Calu3 (cell line): ENCODE measurements at regions of chr12 and their contacts with region 1.

Region 1: DNA sequence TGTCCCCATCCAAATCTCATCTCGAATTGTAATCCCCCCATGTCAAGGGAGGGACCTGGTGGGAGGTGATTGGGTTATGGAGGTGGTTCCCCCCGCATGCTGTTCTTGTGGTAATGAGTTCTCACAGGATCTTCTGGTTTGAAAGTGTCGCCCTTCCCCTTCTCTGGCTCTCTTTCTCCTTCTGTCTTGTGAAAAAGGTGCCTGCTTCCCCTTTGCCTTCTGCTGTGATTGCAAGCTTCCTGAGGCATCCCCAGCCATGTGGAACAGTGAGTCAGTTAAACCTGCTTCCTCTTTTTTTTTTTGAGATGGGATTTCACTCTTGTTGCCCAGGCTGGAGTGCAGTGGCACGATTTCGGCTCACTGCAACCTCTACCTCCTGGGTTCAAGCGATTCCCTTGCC is 104.0 kb downstream of the CCDC91 start:
- DNase-seq: no peak
- H3K4me3 Mint-ChIP-seq: no peak overlapping the region
- H3K27ac Mint-ChIP-seq: no peak overlapping the region
- H3K4me1 Mint-ChIP-seq: no peaks in the 10 kb centered on the region
- H3K27me3 Mint-ChIP-seq: no peaks in the 10 kb centered on the region
- CTCF ChIP-seq: no peak

Region 2: DNA sequence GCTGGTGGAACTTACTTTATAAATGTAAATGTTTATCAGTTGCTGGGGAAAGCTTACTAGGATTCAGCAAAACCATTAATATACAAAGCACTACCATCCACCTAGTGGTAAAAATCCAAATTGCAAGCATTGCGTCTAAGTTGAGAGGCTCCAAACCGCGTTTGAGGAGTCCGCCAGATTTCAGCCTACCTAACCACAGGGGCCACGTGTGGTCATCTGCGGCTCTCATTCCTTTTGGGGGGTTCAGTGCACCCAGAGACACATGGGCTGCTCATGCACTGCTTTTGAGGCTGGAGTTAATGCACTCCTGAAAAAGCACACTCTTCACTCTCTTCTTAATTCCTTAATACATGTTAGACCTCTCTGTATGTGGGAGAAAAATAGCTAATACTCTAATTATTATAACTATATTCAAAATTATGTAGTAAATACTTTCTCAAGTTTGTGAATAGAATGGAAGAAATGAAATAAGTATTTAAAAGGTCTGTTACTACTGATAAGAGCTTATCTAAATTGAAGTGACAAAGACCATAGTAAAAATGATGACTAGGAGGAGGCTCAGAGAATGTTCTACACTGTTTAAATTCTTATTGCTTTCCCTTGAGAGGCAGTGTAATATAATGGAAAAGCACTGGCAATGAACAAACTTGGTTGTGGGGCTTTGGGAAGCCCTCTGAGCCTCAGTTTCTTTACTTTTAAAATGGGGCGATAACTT is 472.9 kb before region 1 on chr12:
- CTCF ChIA-PET with region 1: no interaction called
- intact Hi-C with region 1: no loop called
- DNase-seq: peak; percentile 70
- H3K4me3 Mint-ChIP-seq: no peak overlapping the region
- H3K27ac Mint-ChIP-seq: no peak overlapping the region
- H3K4me1 Mint-ChIP-seq: peaks cover 7% of the 10 kb centered on the region
- H3K27me3 Mint-ChIP-seq: no peaks in the 10 kb centered on the region
- CTCF ChIP-seq: peak; percentile 75

Region 3: GRCh38 chr12:28110329-28110728 is 184.0 kb before region 1 on chr12:
- CTCF ChIA-PET with region 1: no interaction called
- intact Hi-C with region 1: no loop called
- DNase-seq: no peak
- H3K4me3 Mint-ChIP-seq: no peak overlapping the region
- H3K27ac Mint-ChIP-seq: no peak overlapping the region
- H3K4me1 Mint-ChIP-seq: peaks cover 10% of the 10 kb centered on the region
- H3K27me3 Mint-ChIP-seq: no peaks in the 10 kb centered on the region
- CTCF ChIP-seq: no peak

Region 4: DNA sequence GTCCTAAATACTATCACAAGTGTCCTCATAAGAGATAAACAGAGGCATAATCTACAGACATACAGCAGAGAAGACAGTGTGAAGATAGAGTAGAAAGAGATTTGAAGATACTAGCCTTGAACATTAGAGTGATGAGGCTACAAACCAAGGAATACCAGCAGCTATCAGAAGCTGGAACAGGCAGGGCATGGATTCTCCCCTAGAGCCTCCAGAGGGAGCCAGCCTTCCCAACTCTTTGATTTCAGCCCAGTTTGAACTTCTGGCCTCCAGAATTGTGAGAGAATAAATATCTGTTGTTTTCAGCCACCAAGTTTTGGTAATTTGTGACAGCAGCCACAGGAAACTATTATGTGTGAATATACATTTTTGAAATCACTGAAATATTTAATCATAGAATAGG is 56.9 kb before region 1 on chr12:
- CTCF ChIA-PET with region 1: no interaction called
- intact Hi-C with region 1: loop called (anchors 10 kb)
- DNase-seq: peak; percentile 5
- H3K4me3 Mint-ChIP-seq: no peak overlapping the region
- H3K27ac Mint-ChIP-seq: no peak overlapping the region
- H3K4me1 Mint-ChIP-seq: no peaks in the 10 kb centered on the region
- H3K27me3 Mint-ChIP-seq: no peaks in the 10 kb centered on the region
- CTCF ChIP-seq: no peak

Region 5: DNA sequence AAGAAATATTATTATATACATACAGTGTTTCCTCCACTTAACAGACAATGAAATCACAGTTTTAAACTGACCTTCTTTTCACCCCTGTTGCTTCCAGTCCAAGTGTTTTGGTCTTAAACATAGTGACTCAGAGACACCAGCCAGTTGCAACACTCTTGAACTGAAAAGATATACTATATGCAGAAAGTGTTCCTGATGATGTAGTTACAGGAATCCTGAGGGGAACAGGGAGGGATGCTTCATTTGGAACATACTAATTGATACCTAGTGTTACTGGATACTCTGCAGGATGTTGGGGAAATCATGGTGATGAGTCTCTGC is 316.8 kb after region 1 on chr12:
- CTCF ChIA-PET with region 1: no interaction called
- intact Hi-C with region 1: no loop called
- DNase-seq: peak; percentile 47
- H3K4me3 Mint-ChIP-seq: peak overlapping the region; percentile 42
- H3K27ac Mint-ChIP-seq: peak overlapping the region; percentile 96
- H3K4me1 Mint-ChIP-seq: peaks cover 35% of the 10 kb centered on the region
- H3K27me3 Mint-ChIP-seq: no peaks in the 10 kb centered on the region
- CTCF ChIP-seq: no peak